ENCODE measurements at regions of chr17 and their contacts with region 1.

Region 1: GRCh38 chr17:44210342-44211192 is 8.9 kb downstream of the UBTF start:
- DNase-seq: peak; percentile 72 to 96 (median 91)

Region 2: GRCh38 chr17:44344939-44345453 is 134.4 kb after region 1 on chr17 and contains the start of gene GRN:
- intact Hi-C with region 1: loop called (anchors 5 kb)
- DNase-seq: peak; percentile 92 to 99 (median 98)